ENCODE measurements at regions of chrX and their contacts with region 1.

Region 1: GRCh38 chrX:69222103-69223090 is 57.1 kb upstream of the PJA1 start:
- DNase-seq: peak; percentile 47 to 76 (median 66)
- ATAC-seq: peak; percentile 84
- H3K4me3 ChIP-seq: no peak overlapping the region
- H3K4me3 Mint-ChIP-seq: peak overlapping the region in 1 of 10 donors; percentile 52
- H3K27ac ChIP-seq: no peak overlapping the region
- H3K27ac Mint-ChIP-seq: no peak overlapping the region
- H3K4me1 ChIP-seq: no peaks in the 10 kb centered on the region
- H3K4me1 Mint-ChIP-seq: no peaks in the 10 kb centered on the region
- H3K27me3 ChIP-seq: no peaks in the 10 kb centered on the region
- H3K27me3 Mint-ChIP-seq: no peaks in the 10 kb centered on the region

Region 2: DNA sequence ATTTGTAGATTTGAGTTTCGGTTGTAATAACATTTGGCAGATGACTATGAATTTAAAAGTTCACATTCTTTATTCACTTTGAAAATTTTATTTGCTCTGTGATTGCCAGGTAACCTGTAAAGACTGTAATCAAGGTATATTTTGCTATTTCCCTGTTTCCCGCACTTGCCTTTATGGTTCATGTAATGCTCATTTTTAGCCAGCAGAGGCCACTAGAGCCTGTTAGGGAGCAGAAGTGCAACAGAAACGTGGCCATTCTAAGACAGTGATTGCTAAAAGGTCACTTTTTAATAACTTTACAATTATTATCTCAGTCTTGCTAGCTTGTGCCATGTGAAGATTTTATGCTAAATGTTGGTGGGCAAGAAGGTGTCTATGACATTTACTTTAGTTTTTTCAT is 711.1 kb before region 1 on chrX:
- CTCF ChIA-PET with region 1: no interaction called
- POLR2A ChIA-PET with region 1: no interaction called
- intact Hi-C with region 1: loop called in 1 of 2 experiments (anchors 1 kb)
- DNase-seq: peak in 6 of 9 donors; percentile 10 to 43 (median 29)
- ATAC-seq: peak; percentile 65
- H3K4me3 ChIP-seq: no peak overlapping the region
- H3K4me3 Mint-ChIP-seq: no peak overlapping the region
- H3K27ac ChIP-seq: no peak overlapping the region
- H3K27ac Mint-ChIP-seq: peak overlapping the region in 2 of 9 donors; percentile 10 to 29
- H3K4me1 ChIP-seq: peaks cover 0 to 5% of the 10 kb centered on the region in 2 donors
- H3K4me1 Mint-ChIP-seq: peaks cover 13 to 38% (median 27%) of the 10 kb centered on the region in 7 donors
- H3K27me3 ChIP-seq: no peaks in the 10 kb centered on the region
- H3K27me3 Mint-ChIP-seq: no peaks in the 10 kb centered on the region

Region 3: GRCh38 chrX:68732906-68733493 is 489.4 kb before region 1 on chrX:
- CTCF ChIA-PET with region 1: interaction called, 4 read pairs
- POLR2A ChIA-PET with region 1: no interaction called
- intact Hi-C with region 1: loop called (anchors 1 kb)
- DNase-seq: peak; percentile 21 to 69 (median 50)
- ATAC-seq: peak; percentile 78
- H3K4me3 ChIP-seq: no peak overlapping the region
- H3K4me3 Mint-ChIP-seq: no peak overlapping the region
- H3K27ac ChIP-seq: no peak overlapping the region
- H3K27ac Mint-ChIP-seq: no peak overlapping the region
- H3K4me1 ChIP-seq: no peaks in the 10 kb centered on the region
- H3K4me1 Mint-ChIP-seq: peaks cover 0 to 2% (median 0%) of the 10 kb centered on the region in 7 donors
- H3K27me3 ChIP-seq: no peaks in the 10 kb centered on the region
- H3K27me3 Mint-ChIP-seq: peaks cover 0 to 14% (median 9%) of the 10 kb centered on the region in 5 donors

Region 4: GRCh38 chrX:69093960-69094871 is 128.2 kb before region 1 on chrX:
- CTCF ChIA-PET with region 1: no interaction called
- POLR2A ChIA-PET with region 1: no interaction called
- intact Hi-C with region 1: loop called in 1 of 2 experiments (anchors 1 kb)
- DNase-seq: peak in 7 of 9 donors; percentile 5 to 37 (median 24)
- ATAC-seq: no peak
- H3K4me3 ChIP-seq: no peak overlapping the region
- H3K4me3 Mint-ChIP-seq: no peak overlapping the region
- H3K27ac ChIP-seq: no peak overlapping the region
- H3K27ac Mint-ChIP-seq: no peak overlapping the region
- H3K4me1 ChIP-seq: no peaks in the 10 kb centered on the region
- H3K4me1 Mint-ChIP-seq: no peaks in the 10 kb centered on the region
- H3K27me3 ChIP-seq: no peaks in the 10 kb centered on the region
- H3K27me3 Mint-ChIP-seq: no peaks in the 10 kb centered on the region

Region 5: DNA sequence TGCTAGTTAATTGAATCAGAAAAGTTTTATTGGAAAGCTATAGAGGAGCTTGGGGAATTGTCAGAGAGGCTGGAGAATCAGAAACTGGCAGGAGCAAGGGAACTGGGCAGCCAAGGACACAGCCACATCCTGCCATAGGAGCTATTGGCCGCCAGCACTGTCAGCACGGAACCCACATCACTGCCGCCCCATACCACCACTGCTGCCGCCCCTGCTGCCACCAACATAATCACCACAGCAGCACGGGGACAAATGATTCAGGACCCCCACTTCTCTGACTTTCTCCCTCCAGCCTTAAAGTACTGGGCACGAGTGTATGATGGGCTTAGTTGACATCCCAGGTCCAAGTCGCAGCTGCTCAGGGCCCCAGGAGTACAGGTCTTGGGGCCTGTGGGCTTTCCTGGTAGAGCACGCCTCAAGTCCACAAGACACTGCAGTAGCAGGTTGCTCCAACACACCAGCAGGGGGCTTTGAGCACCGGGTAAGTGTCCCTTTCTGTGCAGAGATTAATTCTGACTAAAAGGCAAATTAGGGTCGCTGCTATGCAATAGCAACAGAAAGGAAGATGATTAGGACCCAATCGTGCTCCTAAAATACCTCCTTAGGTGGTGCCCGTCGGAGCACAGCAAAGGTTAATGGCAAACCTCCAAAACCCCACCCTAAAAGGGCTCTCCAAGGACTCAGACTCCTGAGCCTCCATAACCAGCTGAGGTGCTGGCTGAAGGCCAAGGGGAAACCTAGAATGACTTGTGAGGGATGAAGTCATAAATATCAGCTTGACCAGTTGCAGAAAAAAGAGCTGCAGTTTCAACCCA is 64.0 kb before region 1 on chrX:
- CTCF ChIA-PET with region 1: interaction called, 5 read pairs
- POLR2A ChIA-PET with region 1: no interaction called
- intact Hi-C with region 1: loop called (anchors 1 kb)
- DNase-seq: peak in 5 of 9 donors; percentile 23 to 43 (median 31)
- ATAC-seq: peak; percentile 65
- H3K4me3 ChIP-seq: no peak overlapping the region
- H3K4me3 Mint-ChIP-seq: no peak overlapping the region
- H3K27ac ChIP-seq: no peak overlapping the region
- H3K27ac Mint-ChIP-seq: peak overlapping the region in 1 of 9 donors; percentile 76
- H3K4me1 ChIP-seq: peaks cover 0 to 7% of the 10 kb centered on the region in 2 donors
- H3K4me1 Mint-ChIP-seq: peaks cover 8 to 26% (median 21%) of the 10 kb centered on the region in 7 donors
- H3K27me3 ChIP-seq: no peaks in the 10 kb centered on the region
- H3K27me3 Mint-ChIP-seq: no peaks in the 10 kb centered on the region